Psoas muscle (tissue), 8 donors: ENCODE measurements at regions of chr1 and their contacts with region 1.

Region 1: GRCh38 chr1:114979278-114979891 is 50.2 kb upstream of the TSHB start:
- DNase-seq: peak in 1 of 2 donors; percentile 17
- ATAC-seq: peak in 1 of 4 donors; percentile 60
- H3K4me3 ChIP-seq: no peak overlapping the region
- H3K27ac ChIP-seq: no peak overlapping the region
- H3K4me1 ChIP-seq: no peaks in the 10 kb centered on the region
- H3K27me3 ChIP-seq: peaks cover 0 to 2% (median 0%) of the 10 kb centered on the region in 3 donors
- CTCF ChIP-seq: peak; percentile 89

Region 2: DNA sequence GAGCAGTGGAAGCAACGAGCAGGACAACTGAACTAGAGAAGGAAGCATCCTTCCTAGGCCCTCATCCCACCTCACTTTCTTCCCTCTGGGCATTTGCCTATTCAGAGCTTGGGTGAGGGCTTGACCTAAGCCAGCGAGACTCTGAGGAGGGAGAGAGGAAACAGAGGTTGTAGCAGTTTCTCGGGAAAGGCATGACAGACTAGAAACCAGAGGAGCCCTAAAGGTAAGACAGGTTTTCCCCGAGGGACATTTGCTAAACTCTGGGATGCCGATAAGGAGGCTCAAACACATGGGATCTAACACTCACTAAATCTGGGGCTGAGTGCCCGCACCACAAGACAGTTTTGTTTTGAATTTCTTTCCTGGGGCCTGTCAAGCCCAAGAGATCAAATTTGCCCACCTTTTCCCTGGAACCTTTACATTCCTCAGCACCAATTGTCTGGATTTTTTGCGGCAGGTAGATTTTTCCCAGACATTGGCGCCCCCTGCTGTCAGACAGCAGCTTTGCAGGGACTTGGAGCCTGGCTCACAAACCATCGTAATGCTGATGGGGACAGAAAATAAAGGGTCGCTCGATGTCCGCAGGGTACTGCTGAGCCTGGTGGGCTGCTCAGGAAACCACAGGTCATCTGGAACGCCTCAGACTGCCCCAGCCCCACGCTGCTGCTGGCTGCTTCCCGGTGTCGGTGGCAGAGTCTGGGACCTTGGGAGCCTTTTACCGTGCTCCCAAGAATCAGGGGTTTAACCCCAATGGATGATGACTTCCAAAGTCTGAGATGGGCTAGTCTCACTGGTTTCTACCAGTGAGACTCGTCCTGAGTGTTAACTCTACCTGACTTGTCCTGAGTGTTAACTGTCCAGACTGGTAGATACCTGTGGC is 133.4 kb after region 1 on chr1:
- intact Hi-C with region 1: loop called (anchors 1 to 2 kb)
- DNase-seq: no peak
- ATAC-seq: peak in 2 of 4 donors; percentile 49 to 58
- H3K4me3 ChIP-seq: no peak overlapping the region
- H3K27ac ChIP-seq: no peak overlapping the region
- H3K4me1 ChIP-seq: no peaks in the 10 kb centered on the region
- H3K27me3 ChIP-seq: no peaks in the 10 kb centered on the region
- CTCF ChIP-seq: peak; percentile 93

Region 3: GRCh38 chr1:115595279-115596079 is 616.1 kb after region 1 on chr1:
- intact Hi-C with region 1: loop called (anchors 5 to 10 kb)
- DNase-seq: peak; percentile 85 to 90
- ATAC-seq: peak; percentile 76 to 88 (median 84)
- H3K4me3 ChIP-seq: no peak overlapping the region
- H3K27ac ChIP-seq: no peak overlapping the region
- H3K4me1 ChIP-seq: peaks cover 4% of the 10 kb centered on the region
- H3K27me3 ChIP-seq: no peaks in the 10 kb centered on the region
- CTCF ChIP-seq: peak; percentile 88